ENCODE measurements at regions of chr12 and their contacts with region 1.

Region 1: GRCh38 chr12:108129017-108129812 is at the start of gene WSCD2:
- DNase-seq: peak; percentile 18
- H3K4me3 ChIP-seq: peak within 1 kb of the TSS in 2 of 3 experiments; percentile 36 to 48
- H3K27ac ChIP-seq: no peak within 1 kb of the TSS
- H3K4me1 ChIP-seq: peaks cover 4% of the 10 kb centered on the region
- H3K27me3 ChIP-seq: peaks cover 2% of the 10 kb centered on the region
- CTCF ChIP-seq: no peak
- total RNA-seq, gene WSCD2: 0.33 to 0.38 TPM

Region 2: GRCh38 chr12:108090107-108090899 is 38.9 kb before region 1 on chr12:
- CTCF ChIA-PET with region 1: no interaction called
- dilution Hi-C with region 1: loop called (anchors 5 kb)
- in situ Hi-C with region 1: no loop called
- intact Hi-C with region 1: no loop called
- DNase-seq: no peak
- H3K4me3 ChIP-seq: no peak overlapping the region
- H3K27ac ChIP-seq: no peak overlapping the region
- H3K4me1 ChIP-seq: no peaks in the 10 kb centered on the region
- H3K27me3 ChIP-seq: no peaks in the 10 kb centered on the region
- CTCF ChIP-seq: no peak

Measured in mammary epithelial cell (primary cell).